ENCODE measurements at regions of chr21 and their contacts with region 1.

Region 1: DNA sequence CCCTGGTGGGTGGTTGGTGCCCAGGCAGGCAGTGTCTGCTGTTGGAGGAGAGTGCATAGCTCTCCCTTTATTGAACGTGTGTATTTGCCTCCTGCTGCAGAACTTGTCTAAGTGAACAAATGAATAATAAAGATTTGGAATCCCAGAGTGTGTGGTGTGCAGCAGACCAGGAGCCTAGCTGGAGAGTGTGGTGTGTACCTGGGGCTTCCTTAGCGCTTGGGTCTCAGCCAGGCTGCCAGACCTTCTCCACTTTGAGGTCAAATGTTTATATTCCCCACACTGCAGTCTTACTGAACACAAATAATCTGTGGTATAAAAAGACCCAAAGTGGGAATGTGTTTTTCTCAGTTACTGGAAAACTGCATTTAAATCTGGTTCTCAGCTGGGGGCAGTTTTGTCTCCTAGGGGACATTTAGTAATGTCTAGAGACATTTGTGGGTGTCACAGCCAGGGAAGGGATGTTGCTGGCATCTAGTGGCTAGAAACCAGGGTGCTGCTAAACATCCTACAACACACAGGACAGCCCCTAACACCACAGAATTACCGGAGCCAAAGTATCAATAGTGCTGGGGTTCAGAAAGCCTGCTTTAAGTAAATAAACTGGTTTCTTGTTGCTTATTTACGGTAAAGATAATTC is 23.6 kb downstream of the SLC37A1 start:
- DNase-seq: no peak
- H3K4me3 ChIP-seq: no peak overlapping the region
- H3K27ac ChIP-seq: no peak overlapping the region
- H3K4me1 ChIP-seq: no peaks in the 10 kb centered on the region
- H3K27me3 ChIP-seq: no peaks in the 10 kb centered on the region
- CTCF ChIP-seq: peak; percentile 30; the same call in 1 of the 2 replicates

Region 2: DNA sequence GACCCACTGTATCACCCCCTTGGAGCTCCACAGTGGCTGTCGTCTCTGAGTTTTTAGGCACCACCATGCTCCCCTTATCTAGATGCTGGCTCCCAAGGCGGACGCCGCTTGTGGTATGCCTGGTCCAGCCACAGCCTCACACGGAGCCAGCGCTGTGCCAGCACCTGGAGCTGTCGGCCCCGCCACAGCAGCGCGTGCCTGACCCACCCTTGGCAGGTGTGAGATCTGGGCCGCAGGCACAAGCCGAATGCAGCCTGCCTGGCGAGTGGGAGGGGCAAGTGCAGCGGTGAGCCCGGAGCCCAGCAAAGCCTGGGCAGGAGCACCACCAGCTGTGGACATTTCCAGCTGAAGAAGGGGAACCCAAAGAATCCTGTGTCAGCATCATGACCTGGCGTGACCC is 1461.2 kb before region 1 on chr21:
- CTCF ChIA-PET with region 1: no interaction called
- POLR2A ChIA-PET with region 1: no interaction called
- intact Hi-C with region 1: no loop called
- DNase-seq: no peak
- H3K4me3 ChIP-seq: no peak overlapping the region
- H3K27ac ChIP-seq: no peak overlapping the region
- H3K4me1 ChIP-seq: no peaks in the 10 kb centered on the region
- H3K27me3 ChIP-seq: peaks cover 75% of the 10 kb centered on the region
- CTCF ChIP-seq: no peak

Region 3: DNA sequence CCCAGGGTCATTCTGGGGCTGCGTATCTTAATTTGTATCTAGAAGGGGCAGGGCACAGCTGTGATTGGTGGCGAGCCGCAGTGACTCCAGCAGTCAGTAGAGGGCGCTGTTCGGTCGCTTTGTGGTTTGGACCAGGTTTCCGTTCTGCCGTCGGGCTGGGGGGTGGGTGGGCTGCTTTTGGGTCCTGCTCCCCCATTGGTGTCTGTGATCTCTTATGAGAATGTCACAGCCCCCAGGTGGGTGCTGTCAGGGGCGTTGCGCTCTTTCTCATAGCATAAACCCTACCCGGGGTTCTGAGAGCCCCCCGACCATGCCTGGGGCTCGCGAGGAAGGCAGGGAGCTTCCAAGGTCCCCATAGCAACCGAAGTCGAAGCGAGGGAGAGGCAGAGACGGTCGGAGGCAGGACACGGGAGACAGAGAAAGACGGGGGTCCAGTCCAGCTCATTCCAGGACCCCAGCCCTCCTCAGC is 227.4 kb before region 1 on chr21:
- CTCF ChIA-PET with region 1: interaction called, 18 read pairs
- POLR2A ChIA-PET with region 1: no interaction called
- intact Hi-C with region 1: no loop called
- DNase-seq: peak in 1 of 2 experiments; percentile 31
- H3K4me3 ChIP-seq: no peak overlapping the region
- H3K27ac ChIP-seq: no peak overlapping the region
- H3K4me1 ChIP-seq: no peaks in the 10 kb centered on the region
- H3K27me3 ChIP-seq: no peaks in the 10 kb centered on the region
- CTCF ChIP-seq: peak; percentile 74

Region 4: GRCh38 chr21:42486531-42486930 is 50.7 kb before region 1 on chr21:
- CTCF ChIA-PET with region 1: no interaction called
- POLR2A ChIA-PET with region 1: no interaction called
- intact Hi-C with region 1: no loop called
- DNase-seq: no peak
- H3K4me3 ChIP-seq: no peak overlapping the region
- H3K27ac ChIP-seq: no peak overlapping the region
- H3K4me1 ChIP-seq: peaks cover 9% of the 10 kb centered on the region; the same call in 1 of the 2 replicates
- H3K27me3 ChIP-seq: no peaks in the 10 kb centered on the region
- CTCF ChIP-seq: no peak

Measured in PC-9 (cell line).